ENCODE measurements at regions of chr16 and their contacts with region 1.

Region 1: DNA sequence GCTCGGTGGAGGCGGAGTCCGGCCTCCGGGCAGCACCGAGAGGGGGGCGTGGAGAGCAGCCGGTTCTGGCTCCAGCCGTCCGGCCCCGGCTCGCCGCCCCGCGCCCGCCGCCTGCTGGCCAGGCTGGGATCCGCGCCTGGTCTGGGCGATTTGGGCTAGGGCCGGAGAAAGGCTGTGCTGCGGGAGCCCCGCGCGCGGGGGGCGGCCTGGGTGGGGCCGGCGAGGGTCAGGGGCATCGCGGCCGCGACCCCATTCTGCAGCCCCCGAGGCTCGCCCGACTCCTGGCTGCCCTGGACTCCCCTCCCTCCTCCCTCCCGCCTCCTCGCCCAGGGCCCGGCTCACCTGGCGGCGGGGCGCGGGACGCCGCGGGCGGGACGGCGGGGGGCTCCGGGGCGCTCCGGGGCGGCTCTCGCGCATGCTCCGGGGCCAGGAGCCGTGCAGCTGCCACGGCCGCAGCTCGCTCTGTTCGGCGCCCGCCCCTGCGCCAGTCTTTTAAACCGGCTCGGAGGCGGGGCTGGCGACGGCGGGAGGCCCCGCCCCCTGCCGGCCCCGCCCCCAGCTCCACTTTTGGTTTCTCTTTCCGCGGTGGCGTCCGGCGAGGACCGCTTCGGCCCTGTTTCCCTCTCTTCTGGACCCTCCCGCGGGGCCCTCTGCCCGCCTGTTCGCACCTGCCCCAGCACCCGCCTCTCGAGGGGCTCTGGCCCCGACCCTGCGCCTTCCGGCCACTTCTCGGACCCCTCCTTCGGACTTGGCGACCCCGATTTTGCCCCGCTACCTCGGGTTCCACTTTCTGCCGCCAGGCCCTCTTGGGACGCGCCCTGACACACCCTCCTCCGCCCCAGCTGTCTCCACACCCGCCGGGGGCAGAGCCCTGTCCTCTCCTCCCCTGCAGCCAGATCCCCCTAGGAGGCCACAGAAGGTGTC is at the start of gene SOCS1:
- DNase-seq: peak; percentile 98
- ATAC-seq: peak; percentile 68
- H3K4me3 Mint-ChIP-seq: peak within 1 kb of the TSS; percentile 98
- H3K27ac Mint-ChIP-seq: peak within 1 kb of the TSS; percentile 98
- H3K4me1 Mint-ChIP-seq: peaks cover 47% of the 10 kb centered on the region
- H3K27me3 Mint-ChIP-seq: no peaks in the 10 kb centered on the region
- total RNA-seq, gene SOCS1: 165 to 176 TPM

Region 2: DNA sequence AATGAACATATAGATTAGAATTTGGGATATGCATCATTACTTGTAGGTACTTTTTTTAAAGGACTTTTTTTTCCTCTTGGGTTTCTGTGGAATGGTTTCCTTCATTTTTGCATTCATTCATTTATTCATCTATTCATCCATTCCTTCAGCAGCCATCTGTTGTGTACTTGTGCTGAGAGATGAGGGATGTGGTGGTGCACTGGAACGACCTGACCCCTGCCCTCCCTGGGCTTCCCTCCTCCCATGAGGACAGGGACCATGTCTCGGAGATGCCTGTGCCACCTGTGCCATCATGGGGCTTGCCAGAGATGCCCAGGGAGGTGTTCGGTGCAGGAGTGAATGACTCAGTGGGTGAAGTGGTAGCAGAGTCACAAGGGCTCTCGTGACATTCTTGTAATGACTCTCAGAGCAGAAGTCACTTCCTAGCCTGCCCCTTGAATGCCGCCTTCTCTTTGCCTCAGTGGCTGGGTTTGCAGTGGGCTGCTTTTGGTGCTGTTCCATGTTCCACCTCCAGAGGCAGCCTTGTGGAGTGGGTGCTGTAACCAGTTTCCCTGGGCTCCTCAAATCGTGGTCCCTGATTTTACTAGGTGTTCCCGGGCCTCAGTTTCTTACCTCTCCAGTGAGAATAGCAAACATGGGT is 267.7 kb before region 1 on chr16:
- POLR2A ChIA-PET with region 1: interaction called, 23 read pairs
- DNase-seq: peak; percentile 66
- ATAC-seq: peak; percentile 83
- H3K4me3 Mint-ChIP-seq: peak overlapping the region; percentile 56
- H3K27ac Mint-ChIP-seq: peak overlapping the region; percentile 81
- H3K4me1 Mint-ChIP-seq: peaks cover 80% of the 10 kb centered on the region
- H3K27me3 Mint-ChIP-seq: no peaks in the 10 kb centered on the region

Region 3: DNA sequence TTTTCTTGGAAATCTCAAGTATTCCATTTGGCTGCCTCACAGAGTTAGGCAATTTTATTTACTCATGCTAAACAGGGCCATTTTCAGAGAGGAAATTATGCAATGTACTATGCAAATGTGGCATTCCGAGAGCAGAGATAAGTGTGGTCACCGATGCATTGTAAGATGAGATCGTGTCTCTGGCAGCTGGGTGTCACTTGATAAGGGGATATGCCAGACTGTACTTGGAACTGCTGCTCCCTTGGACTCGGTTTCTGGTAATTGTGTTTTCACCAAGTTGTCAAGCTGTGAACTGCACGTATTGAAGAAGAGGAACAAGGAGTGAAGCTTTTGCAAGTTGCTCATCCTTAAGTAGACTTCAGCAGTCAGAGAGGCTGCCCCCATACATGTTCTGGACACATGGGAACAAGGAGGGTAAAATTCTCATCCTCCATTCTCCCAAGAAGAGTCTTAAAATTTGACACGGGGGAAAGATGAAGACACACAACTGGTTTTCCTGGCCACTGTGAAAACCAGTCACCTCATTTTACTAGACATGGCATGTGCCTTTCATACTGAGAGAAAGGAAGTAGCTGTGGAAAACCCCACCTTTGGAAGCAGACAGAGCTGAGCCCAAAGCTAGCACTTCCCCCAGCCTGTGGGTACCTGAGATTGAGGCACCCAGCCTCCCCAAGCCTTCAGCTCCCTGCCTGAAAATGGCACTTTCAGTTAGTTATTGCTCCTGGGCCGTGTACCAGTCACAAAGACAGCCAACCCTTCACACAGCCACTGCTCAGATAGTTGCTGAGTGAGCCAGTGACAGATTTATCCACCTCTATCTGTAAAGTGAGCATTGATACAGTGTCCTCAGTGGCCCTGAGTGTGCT is 150.7 kb before region 1 on chr16:
- POLR2A ChIA-PET with region 1: interaction called, 42 read pairs
- DNase-seq: no peak
- ATAC-seq: peak; percentile 77
- H3K4me3 Mint-ChIP-seq: peak overlapping the region; percentile 72
- H3K27ac Mint-ChIP-seq: peak overlapping the region; percentile 89
- H3K4me1 Mint-ChIP-seq: peaks cover 71% of the 10 kb centered on the region
- H3K27me3 Mint-ChIP-seq: no peaks in the 10 kb centered on the region

Region 4: GRCh38 chr16:11232852-11233726 is 22.9 kb before region 1 on chr16:
- POLR2A ChIA-PET with region 1: interaction called, 227 read pairs
- DNase-seq: peak; percentile 91
- ATAC-seq: peak; percentile 81
- H3K4me3 Mint-ChIP-seq: peak overlapping the region; percentile 84
- H3K27ac Mint-ChIP-seq: peak overlapping the region; percentile 95
- H3K4me1 Mint-ChIP-seq: peaks cover 76% of the 10 kb centered on the region
- H3K27me3 Mint-ChIP-seq: no peaks in the 10 kb centered on the region

Region 5: GRCh38 chr16:11345040-11345862 is 89.3 kb after region 1 on chr16 and contains the start of gene RMI2:
- POLR2A ChIA-PET with region 1: interaction called, 44 read pairs
- DNase-seq: peak; percentile 95
- ATAC-seq: peak; percentile 99
- H3K4me3 Mint-ChIP-seq: peak within 1 kb of the TSS; percentile 99
- H3K27ac Mint-ChIP-seq: peak within 1 kb of the TSS; percentile 91
- H3K4me1 Mint-ChIP-seq: peaks cover 54% of the 10 kb centered on the region
- H3K27me3 Mint-ChIP-seq: no peaks in the 10 kb centered on the region
- total RNA-seq, gene RMI2: 89.8 to 93.0 TPM

Region 6: DNA sequence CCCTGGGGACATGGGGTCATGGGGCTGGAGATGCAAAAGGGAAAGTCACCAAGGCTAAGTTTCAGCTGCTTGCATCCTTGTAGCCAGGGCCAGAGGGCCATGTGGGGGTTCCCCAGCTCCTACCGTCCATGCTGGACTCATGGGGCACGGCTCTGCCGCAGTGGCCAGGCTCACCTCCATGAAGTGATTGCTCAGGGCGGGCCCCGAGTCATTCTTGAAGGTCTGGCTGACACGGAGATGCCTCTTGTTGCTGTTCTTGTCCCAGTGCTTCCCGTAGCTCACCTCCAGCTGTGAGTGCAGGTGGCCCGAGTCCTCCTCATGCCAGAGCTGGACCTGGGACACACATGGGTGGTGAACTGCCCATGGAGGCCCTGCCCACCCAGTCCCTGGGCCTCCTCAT is 203.7 kb after region 1 on chr16:
- POLR2A ChIA-PET with region 1: no interaction called
- DNase-seq: no peak
- ATAC-seq: no peak
- H3K4me3 Mint-ChIP-seq: no peak overlapping the region
- H3K27ac Mint-ChIP-seq: no peak overlapping the region
- H3K4me1 Mint-ChIP-seq: no peaks in the 10 kb centered on the region
- H3K27me3 Mint-ChIP-seq: peaks cover 3% of the 10 kb centered on the region

Measured in activated naive CD8-positive, alpha-beta T cell treated with anti-CD3 and anti-CD28 coated beads, Interleukin-2, amount 10 ng/mL, durations not matched to agents 7 days and 5 days (primary cell).